HepG2 (cell line): ENCODE measurements at regions of chr2 and their contacts with region 1.

Region 1: GRCh38 chr2:86293612-86294011 is 43.8 kb downstream of the REEP1 start:
- DNase-seq: no peak
- ATAC-seq: no peak
- H3K4me3 ChIP-seq: no peak overlapping the region
- H3K27ac ChIP-seq: no peak overlapping the region
- H3K4me1 ChIP-seq: peaks cover 7% of the 10 kb centered on the region
- H3K27me3 ChIP-seq: no peaks in the 10 kb centered on the region; a peak in 1 of 5 replicates
- CTCF ChIP-seq: no peak
- EP300 ChIP-seq: no peak
- POLR2A ChIP-seq: no peak
- RAD21 ChIP-seq: no peak

Region 2: GRCh38 chr2:86274918-86275275 is 18.7 kb before region 1 on chr2:
- CTCF ChIA-PET with region 1: no interaction called
- POLR2A ChIA-PET with region 1: no interaction called
- in situ Hi-C with region 1: no loop called
- intact Hi-C with region 1: loop called (anchors 2 kb)
- DNase-seq: no peak
- ATAC-seq: peak; percentile 80
- H3K4me3 ChIP-seq: no peak overlapping the region
- H3K27ac ChIP-seq: no peak overlapping the region
- H3K4me1 ChIP-seq: peaks cover 12% of the 10 kb centered on the region
- H3K27me3 ChIP-seq: peaks cover 1 to 12% of the 10 kb centered on the region in 2 experiments; a peak in 3 of 5 replicates
- CTCF ChIP-seq: no peak
- EP300 ChIP-seq: no peak
- POLR2A ChIP-seq: no peak
- RAD21 ChIP-seq: no peak

Region 3: DNA sequence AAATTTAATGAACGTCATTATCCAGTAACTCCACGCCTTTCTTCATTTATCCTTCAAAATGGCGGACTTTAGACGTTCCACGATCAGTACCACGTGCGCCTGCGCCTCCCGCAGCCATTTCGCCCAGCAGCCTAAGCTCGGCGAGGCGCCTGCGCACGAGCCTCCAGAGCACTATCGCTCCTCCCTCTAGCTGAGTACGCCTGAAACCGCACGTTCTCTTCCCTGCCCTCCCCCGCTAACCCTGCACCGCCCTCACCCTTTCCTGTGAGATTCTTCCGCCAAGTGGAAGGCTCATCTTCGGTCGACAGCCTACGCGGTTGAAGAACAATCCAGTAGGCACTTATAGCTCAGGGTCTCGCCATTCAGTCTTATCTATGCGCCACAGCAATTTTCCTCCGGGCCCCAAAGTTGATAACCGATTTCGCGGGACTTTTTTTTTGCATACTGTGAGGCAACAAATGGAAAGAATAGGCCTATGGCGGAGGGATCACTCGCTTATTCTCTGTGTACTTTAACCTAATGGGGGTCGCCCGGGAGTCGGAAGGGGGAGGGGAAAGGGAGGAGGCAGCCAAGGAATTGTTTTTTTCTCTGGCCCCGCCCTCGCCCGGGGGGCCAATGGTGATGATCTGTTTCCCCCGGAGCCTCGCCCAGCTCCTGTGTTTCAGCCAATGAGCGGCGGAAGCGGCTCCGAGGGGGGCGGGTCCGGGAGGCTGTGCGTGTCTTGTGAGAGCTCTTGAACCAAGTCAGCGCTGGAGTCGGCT is 147.2 kb after region 1 on chr2 and contains the start of gene KDM3A:
- CTCF ChIA-PET with region 1: no interaction called
- POLR2A ChIA-PET with region 1: no interaction called
- in situ Hi-C with region 1: no loop called
- intact Hi-C with region 1: no loop called
- DNase-seq: peak; percentile 99
- ATAC-seq: peak; percentile 92
- H3K4me3 ChIP-seq: peak within 1 kb of the TSS; percentile 70 to 97 (median 81)
- H3K27ac ChIP-seq: peak within 1 kb of the TSS; percentile 98
- H3K4me1 ChIP-seq: peaks cover 36% of the 10 kb centered on the region
- H3K27me3 ChIP-seq: peaks cover 0 to 4% of the 10 kb centered on the region in 2 experiments; a peak in 1 of 5 replicates
- CTCF ChIP-seq: no peak
- EP300 ChIP-seq: peak; percentile 62 to 75; a peak in 3 of 4 replicates
- POLR2A ChIP-seq: peak in 1 of 2 experiments; percentile 40; a peak in 1 of 4 replicates
- RAD21 ChIP-seq: peak; percentile 46; the same call in 1 of the 2 replicates
- total RNA-seq, gene KDM3A: 21.0 and 30.8 TPM in 2 replicates